ENCODE measurements at regions of chr19 and their contacts with region 1.

Region 1: GRCh38 chr19:4633140-4633967 is 6.0 kb upstream of the TNFAIP8L1 start:
- DNase-seq: peak; percentile 79
- H3K4me3 ChIP-seq: no peak overlapping the region
- H3K27ac ChIP-seq: peak overlapping the region; percentile 73
- H3K4me1 ChIP-seq: peaks cover 29% of the 10 kb centered on the region
- H3K27me3 ChIP-seq: no peaks in the 10 kb centered on the region
- CTCF ChIP-seq: peak; percentile 88 to 95
- POLR2A ChIP-seq: no peak

Region 2: DNA sequence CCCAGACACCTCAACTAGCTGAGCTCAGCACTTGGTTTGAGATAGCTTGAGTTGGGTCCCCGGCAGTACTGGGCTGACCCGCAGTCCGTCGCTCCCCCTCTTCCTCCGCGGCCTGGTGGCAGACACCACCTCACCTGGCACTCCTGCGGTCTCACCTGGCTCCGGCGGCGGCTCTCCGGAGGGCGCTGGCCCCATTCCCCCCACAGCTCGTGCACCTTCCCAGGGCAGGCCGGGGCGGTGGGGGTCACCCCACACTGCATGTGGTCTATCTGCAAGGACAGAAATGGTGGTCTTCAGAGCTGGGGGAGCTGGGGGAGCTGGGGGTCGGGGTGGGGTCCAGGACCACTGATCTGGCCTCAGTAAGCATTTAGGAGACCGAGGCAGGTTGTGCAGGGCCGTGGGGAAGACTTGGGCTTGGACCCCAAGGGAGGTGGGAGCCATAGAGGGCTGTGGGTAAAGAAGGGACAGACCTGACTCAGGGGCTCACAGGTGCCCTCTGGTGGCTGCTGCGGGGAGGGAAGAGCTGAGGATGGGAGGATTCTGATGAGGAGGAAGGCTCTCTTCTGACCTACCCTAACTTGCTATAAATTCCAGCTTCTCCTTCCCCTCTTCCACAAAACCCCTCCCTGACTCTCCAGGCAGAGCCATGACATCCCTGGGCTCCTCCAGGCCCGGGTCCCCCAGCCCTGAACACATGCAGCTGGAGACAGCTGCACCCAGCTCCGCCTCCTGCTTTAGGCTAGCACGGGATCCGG is 108.4 kb before region 1 on chr19:
- CTCF ChIA-PET with region 1: interaction called, 65 read pairs
- POLR2A ChIA-PET with region 1: no interaction called
- dilution Hi-C with region 1: no loop called
- intact Hi-C with region 1: loop called (anchors 1 kb)
- DNase-seq: peak; percentile 31
- H3K4me3 ChIP-seq: no peak overlapping the region
- H3K27ac ChIP-seq: no peak overlapping the region
- H3K4me1 ChIP-seq: no peaks in the 10 kb centered on the region
- H3K27me3 ChIP-seq: no peaks in the 10 kb centered on the region
- CTCF ChIP-seq: peak; percentile 68 to 93
- POLR2A ChIP-seq: no peak

Region 3: GRCh38 chr19:4567584-4568071 is 65.7 kb before region 1 on chr19:
- CTCF ChIA-PET with region 1: interaction called, 66 read pairs
- POLR2A ChIA-PET with region 1: no interaction called
- dilution Hi-C with region 1: no loop called
- intact Hi-C with region 1: no loop called
- DNase-seq: peak; percentile 91
- H3K4me3 ChIP-seq: no peak overlapping the region
- H3K27ac ChIP-seq: peak overlapping the region; percentile 52
- H3K4me1 ChIP-seq: peaks cover 19% of the 10 kb centered on the region
- H3K27me3 ChIP-seq: no peaks in the 10 kb centered on the region
- CTCF ChIP-seq: peak; percentile 94 to 98
- POLR2A ChIP-seq: peak; percentile 24

Region 4: DNA sequence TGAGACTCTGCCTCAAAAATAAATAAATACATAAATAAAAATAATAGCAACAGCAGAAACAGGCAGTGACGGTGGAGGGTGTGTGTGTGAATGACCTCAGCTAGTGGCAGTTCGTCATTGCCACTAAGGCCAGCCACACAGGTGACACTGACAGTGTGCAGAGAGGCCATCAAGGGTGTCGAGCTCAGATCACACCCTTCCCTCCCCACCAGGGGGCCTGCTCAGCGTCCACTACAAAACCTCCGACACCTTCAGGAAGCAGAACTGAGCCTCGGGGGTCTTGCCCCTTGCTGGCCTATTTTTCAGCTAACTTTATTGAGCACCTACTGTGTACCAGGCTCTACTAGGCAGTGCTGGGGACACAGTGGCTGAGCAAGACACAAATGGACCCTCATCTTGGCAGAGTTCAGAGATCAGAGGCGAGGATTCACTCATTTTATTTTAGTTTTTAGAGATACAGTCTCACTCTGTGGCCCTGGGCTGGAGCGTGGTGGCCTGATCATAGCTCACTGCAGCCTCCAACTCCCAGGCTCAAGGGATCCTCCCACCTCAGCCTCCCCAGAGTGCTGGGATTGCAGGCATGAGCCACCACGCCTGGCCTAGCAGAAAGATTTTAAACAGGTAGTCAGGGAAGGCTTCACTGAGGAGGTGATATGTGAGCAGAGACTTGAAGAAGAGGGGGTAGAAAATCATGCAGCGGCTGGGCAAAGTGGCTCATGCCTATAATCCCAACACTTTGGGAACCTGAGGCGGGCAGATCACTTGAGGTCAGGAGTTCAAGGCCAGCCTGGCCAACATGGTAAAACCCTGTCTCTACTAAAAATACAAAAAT is 43.6 kb before region 1 on chr19:
- CTCF ChIA-PET with region 1: interaction called, 57 read pairs
- POLR2A ChIA-PET with region 1: no interaction called
- dilution Hi-C with region 1: no loop called
- intact Hi-C with region 1: no loop called
- DNase-seq: peak; percentile 19
- H3K4me3 ChIP-seq: no peak overlapping the region
- H3K27ac ChIP-seq: no peak overlapping the region
- H3K4me1 ChIP-seq: no peaks in the 10 kb centered on the region
- H3K27me3 ChIP-seq: peaks cover 0 to 3% of the 10 kb centered on the region in 2 experiments
- CTCF ChIP-seq: peak; percentile 35 to 69
- POLR2A ChIP-seq: no peak

Region 5: DNA sequence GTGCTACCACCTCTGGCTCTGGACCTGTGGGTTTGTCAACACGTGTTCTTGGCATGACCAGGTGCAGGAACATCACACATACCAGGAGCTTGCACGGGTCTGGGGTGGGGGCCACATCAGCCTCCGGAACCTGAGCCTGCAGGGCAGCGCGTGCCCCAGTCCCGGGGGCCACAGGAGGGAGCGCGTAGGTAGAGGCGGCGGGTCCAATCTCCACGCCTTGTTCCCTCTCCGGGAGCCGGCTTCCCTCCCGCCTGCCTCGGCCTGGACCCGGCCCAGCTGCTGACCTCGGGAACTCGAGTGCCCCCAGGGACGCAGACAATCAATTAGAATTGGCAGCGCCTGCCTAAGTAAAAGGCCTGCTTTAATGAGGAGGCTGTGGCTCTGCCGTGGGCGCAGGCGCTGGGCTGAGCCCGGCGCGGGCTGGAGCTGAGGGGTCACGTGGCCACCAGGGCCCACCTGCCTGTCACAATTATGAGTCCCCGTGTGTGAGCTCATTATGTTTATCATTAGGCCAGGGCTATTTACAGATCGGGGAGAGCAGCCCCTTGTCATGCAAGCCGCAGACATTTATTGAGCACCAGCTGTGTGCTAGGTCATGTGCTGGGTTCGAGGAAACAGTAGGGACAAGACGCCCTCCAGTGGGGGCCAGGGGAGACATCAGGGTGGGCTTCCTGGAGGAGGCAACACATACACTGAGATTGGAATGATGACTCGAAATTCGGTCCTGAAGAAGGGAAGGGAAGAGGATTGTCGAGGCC is 26.3 kb before region 1 on chr19:
- CTCF ChIA-PET with region 1: interaction called, 12 read pairs
- POLR2A ChIA-PET with region 1: no interaction called
- dilution Hi-C with region 1: no loop called
- intact Hi-C with region 1: no loop called
- DNase-seq: peak; percentile 22
- H3K4me3 ChIP-seq: no peak overlapping the region
- H3K27ac ChIP-seq: no peak overlapping the region
- H3K4me1 ChIP-seq: no peaks in the 10 kb centered on the region
- H3K27me3 ChIP-seq: peaks cover 0 to 6% of the 10 kb centered on the region in 2 experiments
- CTCF ChIP-seq: no peak
- POLR2A ChIP-seq: no peak

Region 6: DNA sequence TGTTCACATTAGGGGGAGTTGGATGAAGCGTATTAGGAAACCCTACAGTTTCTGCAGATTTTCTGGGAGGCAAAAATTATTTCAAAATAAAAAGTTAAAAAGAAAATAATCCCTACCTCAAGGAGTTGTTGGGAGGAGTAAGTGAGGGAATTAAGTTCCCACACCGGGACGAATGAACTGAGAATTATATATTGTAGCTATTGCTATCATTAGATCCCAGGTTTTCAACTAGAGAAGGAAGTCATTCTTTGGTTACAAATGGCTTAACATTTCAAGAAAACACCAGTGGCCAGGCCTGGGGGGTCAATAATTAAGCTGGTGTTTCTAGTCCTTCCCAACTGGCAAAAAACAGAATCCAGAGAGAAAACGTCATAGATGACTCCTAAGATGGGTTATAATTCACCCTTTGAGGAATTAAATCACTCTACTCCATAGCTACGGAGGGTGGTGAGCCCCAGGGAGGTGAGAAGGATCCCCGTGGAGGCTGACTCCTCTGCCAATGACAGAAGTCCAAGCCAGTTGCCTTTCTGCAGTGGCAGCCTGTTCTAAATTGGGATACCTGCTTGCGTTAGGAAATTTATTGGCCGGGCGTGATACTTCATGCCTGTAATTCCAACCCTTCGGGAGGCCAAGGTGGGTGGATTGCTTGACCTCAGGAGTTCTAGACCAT is 38.0 kb after region 1 on chr19:
- CTCF ChIA-PET with region 1: no interaction called
- POLR2A ChIA-PET with region 1: no interaction called
- dilution Hi-C with region 1: no loop called
- intact Hi-C with region 1: no loop called
- DNase-seq: no peak
- H3K4me3 ChIP-seq: no peak overlapping the region
- H3K27ac ChIP-seq: no peak overlapping the region
- H3K4me1 ChIP-seq: peaks cover 13% of the 10 kb centered on the region
- H3K27me3 ChIP-seq: no peaks in the 10 kb centered on the region
- CTCF ChIP-seq: no peak
- POLR2A ChIP-seq: no peak

Measured in endothelial cell of umbilical vein (primary cell).